ENCODE measurements at regions of chr5 and their contacts with region 1.

Region 1: GRCh38 chr5:140244525-140245025 is 58.3 kb downstream of the PFDN1 start:
- DNase-seq: peak; percentile 67 to 82 (median 78)
- H3K4me3 ChIP-seq: no peak overlapping the region
- H3K4me3 Mint-ChIP-seq: peak overlapping the region in 3 of 8 donors; percentile 36 to 57 (median 54)
- H3K27ac ChIP-seq: no peak overlapping the region
- H3K27ac Mint-ChIP-seq: peak overlapping the region in 6 of 7 donors; percentile 62 to 88 (median 68)
- H3K4me1 ChIP-seq: peaks cover 17% of the 10 kb centered on the region
- H3K4me1 Mint-ChIP-seq: peaks cover 12 to 23% (median 15%) of the 10 kb centered on the region in 4 donors
- H3K27me3 ChIP-seq: no peaks in the 10 kb centered on the region
- H3K27me3 Mint-ChIP-seq: no peaks in the 10 kb centered on the region

Region 2: DNA sequence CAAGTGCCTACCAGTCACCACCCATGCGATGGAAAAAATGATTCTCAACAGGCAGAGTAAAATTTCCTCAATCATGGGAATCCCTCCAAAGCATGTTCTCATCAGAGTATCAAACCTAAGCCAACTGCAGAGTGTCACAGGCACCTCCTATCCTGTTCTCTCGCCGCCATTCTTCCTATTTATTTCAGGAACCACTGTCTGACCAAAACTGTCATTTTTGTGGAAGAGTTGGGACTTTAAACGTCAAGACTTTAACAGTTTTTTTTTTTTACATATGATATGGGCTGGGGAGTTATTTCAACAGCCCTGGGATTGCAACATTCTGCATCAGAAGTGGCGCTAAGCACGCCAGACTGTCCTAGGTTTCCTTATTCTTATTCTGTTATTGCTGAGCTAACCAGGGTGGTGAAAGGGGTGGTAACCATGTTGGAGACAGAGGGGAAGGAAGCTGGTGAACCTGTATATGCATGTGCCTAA is 28.9 kb after region 1 on chr5:
- CTCF ChIA-PET with region 1: interaction called, 10 read pairs
- POLR2A ChIA-PET with region 1: no interaction called
- intact Hi-C with region 1: no loop called
- DNase-seq: no peak
- H3K4me3 ChIP-seq: no peak overlapping the region
- H3K4me3 Mint-ChIP-seq: peak overlapping the region in 1 of 8 donors; percentile 3
- H3K27ac ChIP-seq: no peak overlapping the region
- H3K27ac Mint-ChIP-seq: peak overlapping the region in 1 of 7 donors; percentile 21
- H3K4me1 ChIP-seq: no peaks in the 10 kb centered on the region
- H3K4me1 Mint-ChIP-seq: peaks cover 5 to 11% (median 8%) of the 10 kb centered on the region in 4 donors
- H3K27me3 ChIP-seq: no peaks in the 10 kb centered on the region
- H3K27me3 Mint-ChIP-seq: no peaks in the 10 kb centered on the region

Region 3: DNA sequence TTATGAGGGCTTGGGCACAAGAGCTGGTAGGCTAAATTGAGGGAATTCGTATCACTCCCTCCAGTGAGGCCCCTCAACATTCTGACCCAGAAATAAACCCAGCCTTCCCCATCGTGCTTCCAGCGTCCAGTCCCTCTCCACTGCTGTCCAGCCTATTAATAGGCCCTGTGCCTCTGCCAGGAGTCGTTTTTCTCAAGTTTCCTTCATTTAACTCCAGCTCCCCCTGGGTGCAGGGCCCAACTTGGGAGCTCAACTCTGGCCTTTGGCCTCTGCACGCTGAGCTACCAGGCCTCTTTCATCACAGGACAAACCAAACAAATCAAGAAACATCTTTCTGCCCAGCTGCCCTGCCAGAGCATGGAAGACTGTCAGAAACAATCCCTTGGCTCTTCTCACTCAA is 91.8 kb after region 1 on chr5:
- CTCF ChIA-PET with region 1: interaction called, 518 read pairs
- POLR2A ChIA-PET with region 1: no interaction called
- intact Hi-C with region 1: no loop called
- DNase-seq: no peak
- H3K4me3 ChIP-seq: no peak overlapping the region
- H3K4me3 Mint-ChIP-seq: no peak overlapping the region
- H3K27ac ChIP-seq: no peak overlapping the region
- H3K27ac Mint-ChIP-seq: peak overlapping the region in 1 of 7 donors; percentile 87
- H3K4me1 ChIP-seq: peaks cover 2% of the 10 kb centered on the region
- H3K4me1 Mint-ChIP-seq: peaks cover 0 to 10% (median 5%) of the 10 kb centered on the region in 4 donors
- H3K27me3 ChIP-seq: no peaks in the 10 kb centered on the region
- H3K27me3 Mint-ChIP-seq: no peaks in the 10 kb centered on the region

Region 4: DNA sequence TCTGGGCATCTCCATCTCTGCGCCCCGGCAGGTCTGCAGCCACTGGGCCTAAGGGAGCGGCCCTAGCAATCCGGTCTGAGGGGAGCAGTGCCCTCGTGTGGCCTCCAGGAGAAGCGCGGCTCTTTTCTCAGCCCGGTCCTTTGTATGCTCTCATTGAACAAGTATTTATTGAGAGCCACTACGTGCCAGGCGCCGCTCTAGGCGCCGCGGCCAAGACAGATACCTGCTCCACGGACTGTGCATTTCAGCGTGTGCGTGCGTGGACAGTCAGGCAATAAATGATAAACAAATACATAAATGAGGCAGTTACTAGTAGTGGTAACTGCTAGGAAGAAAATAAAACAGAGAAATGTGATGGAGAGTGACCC is 113.1 kb after region 1 on chr5:
- CTCF ChIA-PET with region 1: interaction called, 518 read pairs
- POLR2A ChIA-PET with region 1: interaction called, 3 read pairs
- intact Hi-C with region 1: loop called (anchors 1 kb)
- DNase-seq: peak; percentile 66 to 73 (median 72)
- H3K4me3 ChIP-seq: peak overlapping the region in 1 of 2 donors; percentile 46
- H3K4me3 Mint-ChIP-seq: peak overlapping the region; percentile 76 to 91 (median 84)
- H3K27ac ChIP-seq: no peak overlapping the region
- H3K27ac Mint-ChIP-seq: peak overlapping the region in 6 of 7 donors; percentile 68 to 93 (median 82)
- H3K4me1 ChIP-seq: peaks cover 13% of the 10 kb centered on the region
- H3K4me1 Mint-ChIP-seq: peaks cover 9 to 17% (median 11%) of the 10 kb centered on the region in 4 donors
- H3K27me3 ChIP-seq: no peaks in the 10 kb centered on the region
- H3K27me3 Mint-ChIP-seq: peaks cover 0 to 2% of the 10 kb centered on the region in 2 donors

Region 5: GRCh38 chr5:140725799-140726471 is 481.4 kb after region 1 on chr5:
- CTCF ChIA-PET with region 1: interaction called, 9 read pairs
- POLR2A ChIA-PET with region 1: no interaction called
- intact Hi-C with region 1: loop called (anchors 2 kb)
- DNase-seq: peak; percentile 61 to 88 (median 63)
- H3K4me3 ChIP-seq: peak overlapping the region; percentile 39 to 42
- H3K4me3 Mint-ChIP-seq: peak overlapping the region; percentile 75 to 90 (median 81)
- H3K27ac ChIP-seq: no peak overlapping the region
- H3K27ac Mint-ChIP-seq: peak overlapping the region; percentile 37 to 99 (median 74)
- H3K4me1 ChIP-seq: peaks cover 6% of the 10 kb centered on the region
- H3K4me1 Mint-ChIP-seq: peaks cover 9 to 25% (median 17%) of the 10 kb centered on the region in 4 donors
- H3K27me3 ChIP-seq: no peaks in the 10 kb centered on the region
- H3K27me3 Mint-ChIP-seq: peaks cover 3 to 11% of the 10 kb centered on the region in 2 donors